ENCODE measurements at regions of chr1 and their contacts with region 1.

Region 1: DNA sequence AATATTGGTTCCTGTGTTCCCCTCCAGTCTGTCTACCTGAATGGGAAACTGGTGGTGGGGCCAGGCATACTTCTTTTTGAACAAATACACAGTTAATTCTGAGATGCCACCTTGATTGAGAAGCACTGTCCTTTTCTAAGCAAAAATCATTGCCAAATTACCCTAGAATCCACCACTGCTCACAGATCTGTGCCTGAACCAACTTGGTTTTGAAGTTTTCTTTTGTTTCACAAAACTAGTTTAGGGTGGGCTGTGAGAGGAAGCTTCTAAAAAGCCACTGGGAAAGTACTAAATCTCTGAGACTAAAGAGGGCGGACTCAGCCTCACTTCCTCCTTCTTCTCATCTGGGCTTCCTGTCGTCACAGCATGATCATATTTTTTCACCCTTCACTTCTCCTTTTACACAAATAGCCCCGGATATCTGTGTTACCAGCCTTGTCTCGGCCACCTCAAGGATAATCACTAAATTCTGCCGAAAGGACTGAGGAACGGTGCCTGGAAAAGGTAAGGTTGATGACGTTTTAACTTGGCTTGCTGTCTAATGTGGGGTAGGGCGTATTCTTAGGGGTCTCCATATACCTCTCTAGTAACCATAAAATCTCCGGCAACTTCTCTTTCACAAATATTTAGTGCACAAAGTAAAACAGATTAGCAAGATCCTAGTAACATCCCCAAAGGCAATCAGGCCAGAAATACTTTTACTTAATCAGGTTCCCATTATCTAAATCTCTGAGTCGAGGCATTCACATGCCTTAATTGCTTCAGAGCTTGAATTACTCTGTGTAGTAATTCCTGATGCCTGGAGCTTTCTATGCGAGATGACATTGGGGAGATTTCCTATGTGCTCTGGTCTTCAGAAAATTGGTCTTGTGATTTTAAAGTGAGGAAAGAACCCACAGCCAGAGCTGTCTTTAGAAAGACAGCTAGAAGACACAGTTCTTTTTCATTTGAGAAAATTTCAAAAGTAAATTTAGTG is at the start of gene CD53:
- DNase-seq: peak in 12 of 14 experiments; percentile 24 to 90 (median 50)
- ATAC-seq: peak; percentile 69
- H3K4me3 ChIP-seq: peak within 1 kb of the TSS; percentile 66
- H3K4me3 Mint-ChIP-seq: peak within 1 kb of the TSS; percentile 91
- H3K27ac ChIP-seq: peak within 1 kb of the TSS; percentile 92 to 93
- H3K27ac Mint-ChIP-seq: peak within 1 kb of the TSS; percentile 92
- H3K4me1 ChIP-seq: peaks cover 32% of the 10 kb centered on the region
- H3K4me1 Mint-ChIP-seq: peaks cover 65% of the 10 kb centered on the region
- H3K27me3 ChIP-seq: no peaks in the 10 kb centered on the region
- H3K27me3 Mint-ChIP-seq: no peaks in the 10 kb centered on the region
- CTCF ChIP-seq: no peak
- total RNA-seq, gene CD53: 169 to 176 TPM

Region 2: DNA sequence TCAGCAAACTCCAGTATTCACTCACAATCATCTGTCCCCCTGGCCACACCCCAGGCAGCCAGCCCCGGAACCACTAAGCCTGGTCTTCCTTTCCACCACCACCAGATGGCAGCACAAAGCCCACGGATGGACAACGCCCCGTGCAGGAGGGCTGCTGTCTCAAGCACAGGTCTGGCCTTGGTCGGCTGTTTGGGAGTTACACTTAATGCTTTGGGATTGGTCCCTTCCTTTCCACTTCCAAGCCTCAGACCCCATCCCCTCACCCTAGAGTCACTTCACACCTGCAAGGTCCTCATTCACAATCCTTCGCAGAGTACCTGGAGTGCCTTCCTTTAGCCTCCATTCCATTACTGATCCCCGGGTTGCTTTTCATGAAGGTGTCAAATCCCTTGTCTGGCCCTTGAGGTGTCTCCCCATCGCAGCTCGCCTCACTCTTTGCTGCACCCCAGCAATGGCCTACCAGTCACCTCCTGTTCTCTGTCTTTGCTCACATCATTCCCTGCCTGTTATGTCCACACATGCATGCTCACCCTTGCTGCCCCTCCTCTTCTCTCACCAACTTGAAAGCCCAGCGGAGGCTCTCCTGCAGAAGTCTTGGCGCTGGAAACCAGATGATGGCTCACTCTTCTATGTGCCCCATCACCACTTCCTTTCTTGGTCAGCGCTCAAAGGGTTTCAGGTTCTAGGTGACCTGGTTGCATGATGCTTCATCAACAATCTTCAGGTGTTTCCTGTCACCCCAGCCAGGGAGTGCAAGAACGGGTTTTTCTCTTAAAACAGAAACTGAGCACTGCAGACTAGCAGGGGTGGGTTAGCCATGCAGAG is 242.0 kb before region 1 on chr1:
- CTCF ChIA-PET with region 1: no interaction called
- POLR2A ChIA-PET with region 1: interaction called, 4 read pairs
- intact Hi-C with region 1: loop called (anchors 5 to 10 kb)
- DNase-seq: peak; percentile 77 to 93 (median 83)
- ATAC-seq: peak; percentile 72
- H3K4me3 ChIP-seq: peak overlapping the region; percentile 43
- H3K4me3 Mint-ChIP-seq: no peak overlapping the region
- H3K27ac ChIP-seq: peak overlapping the region; percentile 66 to 75
- H3K27ac Mint-ChIP-seq: no peak overlapping the region
- H3K4me1 ChIP-seq: peaks cover 87% of the 10 kb centered on the region
- H3K4me1 Mint-ChIP-seq: peaks cover 47% of the 10 kb centered on the region
- H3K27me3 ChIP-seq: no peaks in the 10 kb centered on the region
- H3K27me3 Mint-ChIP-seq: no peaks in the 10 kb centered on the region
- CTCF ChIP-seq: peak; percentile 87

Region 3: GRCh38 chr1:110787328-110788071 is 85.5 kb before region 1 on chr1:
- CTCF ChIA-PET with region 1: interaction called, 6 read pairs
- POLR2A ChIA-PET with region 1: interaction called, 106 read pairs
- intact Hi-C with region 1: loop called (anchors 5 kb)
- DNase-seq: peak in 11 of 14 experiments; percentile 4 to 87 (median 41)
- ATAC-seq: peak; percentile 71
- H3K4me3 ChIP-seq: peak overlapping the region; percentile 35
- H3K4me3 Mint-ChIP-seq: peak overlapping the region; percentile 75
- H3K27ac ChIP-seq: peak overlapping the region; percentile 23 to 58
- H3K27ac Mint-ChIP-seq: peak overlapping the region; percentile 82
- H3K4me1 ChIP-seq: peaks cover 55% of the 10 kb centered on the region
- H3K4me1 Mint-ChIP-seq: peaks cover 77% of the 10 kb centered on the region
- H3K27me3 ChIP-seq: no peaks in the 10 kb centered on the region
- H3K27me3 Mint-ChIP-seq: no peaks in the 10 kb centered on the region
- CTCF ChIP-seq: no peak

Region 4: GRCh38 chr1:110860174-110860573 is 12.9 kb before region 1 on chr1:
- CTCF ChIA-PET with region 1: no interaction called
- POLR2A ChIA-PET with region 1: interaction called, 11 read pairs
- intact Hi-C with region 1: no loop called
- DNase-seq: no peak
- ATAC-seq: no peak
- H3K4me3 ChIP-seq: no peak overlapping the region
- H3K4me3 Mint-ChIP-seq: no peak overlapping the region
- H3K27ac ChIP-seq: no peak overlapping the region
- H3K27ac Mint-ChIP-seq: no peak overlapping the region
- H3K4me1 ChIP-seq: peaks cover 3% of the 10 kb centered on the region
- H3K4me1 Mint-ChIP-seq: peaks cover 14% of the 10 kb centered on the region
- H3K27me3 ChIP-seq: no peaks in the 10 kb centered on the region
- H3K27me3 Mint-ChIP-seq: no peaks in the 10 kb centered on the region
- CTCF ChIP-seq: no peak

Region 5: GRCh38 chr1:110896090-110896489 is 23.1 kb after region 1 on chr1:
- CTCF ChIA-PET with region 1: interaction called, 4 read pairs
- POLR2A ChIA-PET with region 1: interaction called, 15 read pairs
- intact Hi-C with region 1: loop called (anchors 1 to 2 kb)
- DNase-seq: peak in 3 of 14 experiments; percentile 65 to 77 (median 71)
- ATAC-seq: peak; percentile 66
- H3K4me3 ChIP-seq: no peak overlapping the region
- H3K4me3 Mint-ChIP-seq: peak overlapping the region; percentile 68
- H3K27ac ChIP-seq: peak overlapping the region; percentile 29 to 38
- H3K27ac Mint-ChIP-seq: peak overlapping the region; percentile 92
- H3K4me1 ChIP-seq: peaks cover 73% of the 10 kb centered on the region
- H3K4me1 Mint-ChIP-seq: peaks cover 86% of the 10 kb centered on the region
- H3K27me3 ChIP-seq: no peaks in the 10 kb centered on the region
- H3K27me3 Mint-ChIP-seq: no peaks in the 10 kb centered on the region
- CTCF ChIP-seq: no peak

Region 6: DNA sequence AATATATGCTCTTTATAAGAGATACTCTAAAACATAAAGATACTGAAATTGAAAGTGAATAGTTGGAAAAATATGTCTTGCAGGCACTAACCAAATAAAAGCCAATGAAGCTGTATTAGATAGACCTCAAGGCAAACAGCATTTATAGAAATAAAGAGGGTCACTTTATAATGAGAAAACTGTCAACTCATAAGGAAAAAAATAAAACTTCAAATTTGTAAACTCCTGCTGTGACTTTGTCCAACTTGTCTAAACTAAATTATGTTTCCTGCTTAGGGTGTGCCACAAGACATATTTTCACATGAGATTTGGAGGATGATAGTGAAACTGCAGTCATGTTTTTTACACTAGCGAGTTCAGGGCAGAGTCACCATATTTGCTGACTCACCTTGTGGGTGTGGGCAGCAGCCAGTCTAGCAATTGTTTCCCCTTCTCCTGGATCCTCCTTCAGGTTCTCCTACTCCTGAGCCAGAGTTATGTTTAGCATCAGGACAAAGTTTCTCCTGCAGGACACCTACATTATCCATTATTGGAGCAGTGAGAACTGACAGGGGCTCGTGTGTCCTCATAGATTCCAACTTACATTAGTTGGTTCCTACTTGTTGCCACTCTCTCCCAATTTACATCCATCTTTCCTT is 43.8 kb after region 1 on chr1:
- CTCF ChIA-PET with region 1: no interaction called
- POLR2A ChIA-PET with region 1: no interaction called
- intact Hi-C with region 1: loop called in 1 of 2 experiments (anchors 5 kb)
- DNase-seq: peak in 4 of 14 experiments; percentile 19 to 55 (median 42)
- ATAC-seq: peak; percentile 54
- H3K4me3 ChIP-seq: no peak overlapping the region
- H3K4me3 Mint-ChIP-seq: no peak overlapping the region
- H3K27ac ChIP-seq: no peak overlapping the region
- H3K27ac Mint-ChIP-seq: no peak overlapping the region
- H3K4me1 ChIP-seq: peaks cover 4% of the 10 kb centered on the region
- H3K4me1 Mint-ChIP-seq: peaks cover 13% of the 10 kb centered on the region
- H3K27me3 ChIP-seq: no peaks in the 10 kb centered on the region
- H3K27me3 Mint-ChIP-seq: peaks cover 18% of the 10 kb centered on the region
- CTCF ChIP-seq: no peak

Region 7: DNA sequence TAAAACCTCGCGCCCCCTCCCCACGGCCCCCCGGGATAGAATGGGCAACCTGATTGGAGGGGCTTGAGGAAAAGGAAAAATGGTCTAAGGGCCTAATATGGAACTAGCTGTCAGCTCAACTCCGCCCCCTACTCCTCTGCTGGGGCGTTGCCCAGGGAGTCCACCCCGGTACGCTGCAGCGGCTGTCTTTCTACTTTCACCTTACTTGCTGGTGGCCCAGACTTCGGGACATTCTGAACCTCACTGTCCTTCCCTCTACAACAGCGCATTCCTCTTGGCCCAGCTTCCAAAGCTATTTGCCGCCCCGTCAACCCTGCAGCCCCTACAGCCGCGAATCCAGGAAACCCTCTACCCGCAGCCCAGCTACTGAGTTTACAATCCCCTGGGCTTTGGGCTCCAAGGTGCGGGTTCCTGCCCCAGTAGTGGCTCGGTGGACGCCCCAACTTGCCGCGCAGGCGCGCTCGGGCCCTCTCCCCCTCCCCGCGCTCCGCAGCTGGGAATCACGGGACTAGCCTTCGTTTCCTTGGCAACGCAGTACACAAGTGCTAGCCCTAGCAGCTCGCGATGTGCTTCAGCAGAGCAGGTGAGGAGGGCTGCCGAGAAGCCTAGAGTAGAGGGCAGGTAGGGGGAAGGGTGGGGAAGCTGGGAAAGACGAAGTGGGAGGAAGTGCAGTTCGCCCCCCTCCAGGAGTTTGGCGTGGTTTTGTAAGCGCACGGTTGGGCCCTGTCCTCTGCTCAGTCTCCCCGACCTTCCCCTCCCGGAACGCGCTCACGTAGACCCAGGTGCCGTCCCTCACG is 473.3 kb after region 1 on chr1:
- CTCF ChIA-PET with region 1: no interaction called
- POLR2A ChIA-PET with region 1: no interaction called
- intact Hi-C with region 1: loop called in 1 of 2 experiments (anchors 10 kb)
- DNase-seq: peak; percentile 76 to 97 (median 86)
- ATAC-seq: peak; percentile 88
- H3K4me3 ChIP-seq: peak overlapping the region; percentile 71
- H3K4me3 Mint-ChIP-seq: peak overlapping the region; percentile 88
- H3K27ac ChIP-seq: peak overlapping the region; percentile 43 to 73
- H3K27ac Mint-ChIP-seq: peak overlapping the region; percentile 85
- H3K4me1 ChIP-seq: peaks cover 14% of the 10 kb centered on the region
- H3K4me1 Mint-ChIP-seq: peaks cover 29% of the 10 kb centered on the region
- H3K27me3 ChIP-seq: no peaks in the 10 kb centered on the region
- H3K27me3 Mint-ChIP-seq: no peaks in the 10 kb centered on the region
- CTCF ChIP-seq: peak; percentile 30